ENCODE measurements at regions of chr18 and their contacts with region 1.

Region 1: DNA sequence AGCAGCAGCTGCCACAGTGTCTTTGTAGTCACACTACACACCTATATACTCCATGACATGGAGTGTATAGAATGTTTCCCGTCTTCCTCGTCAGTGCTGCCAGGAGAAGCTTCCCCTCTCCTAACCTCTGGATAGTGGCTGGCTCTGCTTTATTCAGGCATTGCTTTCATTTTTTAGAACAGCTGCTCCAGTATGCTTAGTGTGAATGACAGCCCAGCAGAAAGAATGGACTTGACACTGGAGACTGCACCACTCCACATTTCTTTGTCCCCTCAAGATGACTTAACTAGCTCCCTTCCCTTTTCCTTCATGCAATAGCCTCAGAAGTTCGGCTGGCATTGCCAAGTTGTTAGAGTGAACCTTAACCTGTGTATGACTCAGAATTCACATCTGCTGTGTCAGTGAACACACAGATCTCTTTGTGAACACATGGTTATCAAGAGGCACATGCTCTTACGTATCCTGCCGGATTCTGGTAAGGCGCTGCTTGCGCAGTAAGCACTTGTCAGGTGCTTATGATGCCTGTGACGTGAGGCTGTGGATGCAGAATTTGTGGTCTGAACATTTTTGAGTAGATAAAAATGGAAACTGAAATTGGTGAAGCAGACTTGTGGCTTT is 73.9 kb downstream of the NEDD4L start:
- DNase-seq: no peak
- H3K4me3 ChIP-seq: no peak overlapping the region
- H3K27ac ChIP-seq: no peak overlapping the region
- H3K4me1 ChIP-seq: peaks cover 0 to 16% (median 5%) of the 10 kb centered on the region in 4 experiments; a peak in 6 of 7 replicates
- H3K27me3 ChIP-seq: no peaks in the 10 kb centered on the region
- CTCF ChIP-seq: no peak
- EP300 ChIP-seq: no peak
- POLR2A ChIP-seq: no peak
- RAD21 ChIP-seq: no peak

Region 2: DNA sequence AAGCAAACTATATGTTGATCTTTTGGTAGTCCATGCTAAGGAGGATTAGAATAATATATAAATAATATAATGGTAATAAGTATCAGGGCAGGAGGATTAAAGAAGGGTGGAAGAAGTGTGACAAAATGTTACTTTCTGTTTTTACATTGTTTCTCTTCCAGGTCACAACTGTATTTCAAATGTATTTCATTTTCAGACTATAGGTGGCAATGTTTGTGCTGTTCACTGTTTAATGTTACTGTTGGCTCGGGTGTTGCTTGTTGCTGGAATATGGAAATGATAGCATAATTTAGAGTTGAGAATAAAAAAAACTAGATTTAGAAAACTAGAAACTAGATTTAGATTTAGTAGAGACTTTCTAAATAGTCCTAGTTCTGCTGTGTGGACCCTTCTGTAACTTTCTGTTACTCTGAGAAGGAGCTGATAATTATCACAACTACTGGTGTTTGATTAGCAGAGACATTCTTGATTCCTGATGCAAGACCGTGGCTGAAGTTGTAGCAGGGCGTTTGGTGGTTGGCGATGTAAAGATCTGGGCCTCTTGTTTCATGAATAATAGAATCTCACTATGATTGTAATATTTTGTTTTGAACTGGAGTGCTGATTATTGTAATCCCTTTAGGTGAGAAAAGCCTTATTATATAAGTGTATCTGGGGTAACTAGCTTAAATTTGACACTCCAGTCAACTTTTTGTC is 66.0 kb before region 1 on chr18:
- CTCF ChIA-PET with region 1: interaction called, 43 read pairs
- POLR2A ChIA-PET with region 1: no interaction called
- DNase-seq: no peak
- H3K4me3 ChIP-seq: no peak overlapping the region
- H3K27ac ChIP-seq: no peak overlapping the region
- H3K4me1 ChIP-seq: peaks cover 0 to 14% (median 10%) of the 10 kb centered on the region in 4 experiments; a peak in 3 of 7 replicates
- H3K27me3 ChIP-seq: no peaks in the 10 kb centered on the region; a peak in 1 of 7 replicates
- CTCF ChIP-seq: no peak
- EP300 ChIP-seq: no peak
- POLR2A ChIP-seq: no peak
- RAD21 ChIP-seq: 0 out of 4 replicates have a peak, but pooled peaks have one; percentile 2 to 10

Region 3: DNA sequence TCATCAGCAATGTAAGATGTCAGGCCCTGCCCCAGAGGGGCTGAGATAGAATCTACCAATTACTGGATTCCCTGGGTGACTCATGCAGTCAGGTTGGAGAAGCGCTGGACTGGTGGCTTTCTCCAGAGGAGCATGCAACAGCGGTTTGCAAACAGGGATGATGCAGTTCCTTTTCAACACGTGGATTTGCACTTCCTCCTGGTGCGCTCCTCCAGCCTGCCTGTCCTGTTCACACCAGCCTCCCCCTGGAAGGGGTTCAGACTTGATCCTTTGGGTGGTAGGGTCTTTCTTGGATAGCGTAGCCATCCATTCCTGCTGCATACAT is 84.5 kb after region 1 on chr18:
- CTCF ChIA-PET with region 1: no interaction called
- POLR2A ChIA-PET with region 1: no interaction called
- DNase-seq: no peak
- H3K4me3 ChIP-seq: no peak overlapping the region
- H3K27ac ChIP-seq: no peak overlapping the region
- H3K4me1 ChIP-seq: peaks cover 7 to 19% (median 12%) of the 10 kb centered on the region in 4 experiments
- H3K27me3 ChIP-seq: no peaks in the 10 kb centered on the region
- CTCF ChIP-seq: no peak
- EP300 ChIP-seq: no peak
- POLR2A ChIP-seq: no peak
- RAD21 ChIP-seq: no peak

Region 4: DNA sequence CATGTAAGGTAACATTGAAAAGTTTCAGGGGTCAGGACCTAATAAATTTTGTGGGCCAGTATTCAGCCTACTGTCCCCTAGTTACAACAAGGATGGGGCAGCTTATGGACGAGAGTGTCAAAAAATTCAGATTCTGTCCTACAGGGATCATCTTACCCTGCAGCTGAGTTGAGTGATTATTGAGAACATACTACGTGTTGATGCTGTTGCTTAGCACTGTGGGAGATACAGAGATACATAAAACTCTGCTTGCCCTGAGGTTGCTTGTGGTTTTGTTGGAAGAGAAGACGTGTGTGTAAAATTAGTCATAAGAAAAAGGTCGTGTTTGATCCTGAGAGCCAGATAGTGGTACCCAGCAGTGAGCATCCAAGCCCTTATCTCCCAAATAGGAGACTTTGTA is 179.3 kb after region 1 on chr18:
- CTCF ChIA-PET with region 1: no interaction called
- POLR2A ChIA-PET with region 1: no interaction called
- DNase-seq: no peak
- H3K4me3 ChIP-seq: no peak overlapping the region
- H3K27ac ChIP-seq: no peak overlapping the region
- H3K4me1 ChIP-seq: no peaks in the 10 kb centered on the region
- H3K27me3 ChIP-seq: no peaks in the 10 kb centered on the region
- CTCF ChIP-seq: no peak
- EP300 ChIP-seq: no peak
- POLR2A ChIP-seq: no peak
- RAD21 ChIP-seq: no peak